Activated naive CD4-positive, alpha-beta T cell treated with anti-CD3 and anti-CD28 coated beads, Interleukin-2, amount 10 ng/mL, durations not matched to agents 7 days and 5 days (primary cell): ENCODE measurements at regions of chr4 and their contacts with region 1.

Region 1: GRCh38 chr4:88514557-88515511 is 8.7 kb downstream of the PYURF start:
- DNase-seq: no peak
- H3K4me3 Mint-ChIP-seq: no peak overlapping the region
- H3K27ac Mint-ChIP-seq: no peak overlapping the region
- H3K4me1 Mint-ChIP-seq: no peaks in the 10 kb centered on the region
- H3K27me3 Mint-ChIP-seq: peaks cover 4% of the 10 kb centered on the region

Region 2: DNA sequence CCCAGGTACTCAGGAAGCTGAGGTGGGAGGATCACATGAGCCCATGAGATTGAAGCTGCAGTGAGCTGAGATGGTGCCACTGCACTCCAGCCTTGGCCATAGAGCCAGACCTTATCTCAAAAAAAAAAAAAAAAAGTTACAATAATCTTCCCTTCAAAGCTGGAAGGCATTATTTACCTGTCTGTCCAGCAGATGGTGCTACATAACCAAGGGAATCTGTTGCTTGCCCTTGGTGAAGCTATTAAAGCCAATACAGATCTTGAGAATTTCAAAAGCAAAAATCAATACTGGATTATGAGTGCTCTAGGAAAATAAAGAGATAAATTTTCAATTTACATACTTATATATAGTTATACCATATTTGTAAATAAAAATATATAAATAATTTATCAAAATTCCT is 481.5 kb before region 1 on chr4:
- CTCF ChIA-PET with region 1: interaction called, 12 read pairs
- DNase-seq: peak; percentile 48
- H3K4me3 Mint-ChIP-seq: no peak overlapping the region
- H3K27ac Mint-ChIP-seq: no peak overlapping the region
- H3K4me1 Mint-ChIP-seq: no peaks in the 10 kb centered on the region
- H3K27me3 Mint-ChIP-seq: no peaks in the 10 kb centered on the region

Region 3: DNA sequence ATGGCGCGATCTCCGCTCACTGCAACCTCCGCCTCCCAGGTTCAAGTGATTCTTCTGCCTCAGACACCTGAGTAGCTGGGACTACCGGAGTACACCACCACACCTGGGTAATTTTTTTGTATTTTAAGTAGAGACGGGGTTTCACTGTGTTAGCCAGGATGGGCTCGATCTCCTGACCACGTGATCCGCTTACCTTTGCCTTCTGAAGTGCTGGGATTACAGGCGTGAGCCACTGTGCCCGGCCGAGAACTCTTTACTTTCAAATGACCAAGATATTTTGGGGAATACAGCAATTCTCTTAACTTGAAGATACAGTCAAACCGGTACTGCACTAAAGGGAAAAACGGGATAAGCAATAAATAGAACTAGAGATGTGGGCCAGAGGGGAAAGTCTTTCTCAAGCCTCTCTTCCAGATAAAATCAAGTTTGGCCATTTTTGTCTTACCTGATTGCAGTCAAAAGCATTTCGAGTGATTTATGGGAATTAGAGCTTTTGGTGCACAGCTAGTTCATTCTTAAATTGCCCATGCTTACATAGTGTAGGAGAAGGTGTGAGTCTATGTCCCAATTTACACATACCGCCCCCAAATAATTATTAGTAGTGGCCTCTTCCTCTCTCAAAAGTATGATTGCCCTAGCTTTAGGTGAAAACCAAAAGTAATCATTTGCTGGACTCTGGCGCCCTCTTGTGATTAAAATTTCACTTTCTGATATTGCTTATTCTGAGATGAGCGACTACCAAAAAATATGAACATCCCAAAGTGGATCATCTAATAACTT is 303.2 kb before region 1 on chr4:
- CTCF ChIA-PET with region 1: interaction called, 138 read pairs
- DNase-seq: peak; percentile 61
- H3K4me3 Mint-ChIP-seq: no peak overlapping the region
- H3K27ac Mint-ChIP-seq: no peak overlapping the region
- H3K4me1 Mint-ChIP-seq: no peaks in the 10 kb centered on the region
- H3K27me3 Mint-ChIP-seq: peaks cover 7% of the 10 kb centered on the region

Region 4: DNA sequence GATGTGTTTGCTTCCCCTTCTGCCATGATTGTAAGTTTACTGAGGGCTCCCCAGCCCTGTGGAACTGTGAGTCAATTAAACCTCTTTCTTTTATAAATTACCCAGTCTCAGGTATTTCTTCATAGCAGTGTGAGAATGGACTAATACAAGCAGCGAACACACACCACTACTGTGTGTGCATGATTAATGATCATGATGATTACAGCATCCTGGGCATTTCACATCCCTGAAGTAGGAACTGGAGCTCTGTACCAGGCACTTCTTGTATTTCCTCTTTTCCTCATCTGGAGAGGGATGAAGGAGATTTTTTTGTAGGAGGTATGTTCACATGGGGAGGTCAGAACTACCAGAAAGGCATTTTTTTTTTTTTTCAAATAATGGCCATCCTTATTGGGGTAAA is 291.3 kb before region 1 on chr4:
- CTCF ChIA-PET with region 1: interaction called, 138 read pairs
- DNase-seq: no peak
- H3K4me3 Mint-ChIP-seq: no peak overlapping the region
- H3K27ac Mint-ChIP-seq: no peak overlapping the region
- H3K4me1 Mint-ChIP-seq: peaks cover 10% of the 10 kb centered on the region
- H3K27me3 Mint-ChIP-seq: no peaks in the 10 kb centered on the region

Region 5: GRCh38 chr4:88369936-88370335 is 144.9 kb before region 1 on chr4:
- CTCF ChIA-PET with region 1: interaction called, 59 read pairs
- DNase-seq: no peak
- H3K4me3 Mint-ChIP-seq: no peak overlapping the region
- H3K27ac Mint-ChIP-seq: no peak overlapping the region
- H3K4me1 Mint-ChIP-seq: no peaks in the 10 kb centered on the region
- H3K27me3 Mint-ChIP-seq: peaks cover 4% of the 10 kb centered on the region